Posterior cingulate gyrus (tissue), 11 donors: ENCODE measurements at regions of chr7 and their contacts with region 1.

Region 1: GRCh38 chr7:157138424-157139110 is at the start of gene UBE3C:
- DNase-seq: peak; percentile 81 to 99 (median 86)

Region 2: GRCh38 chr7:157228864-157229422 is 90.4 kb after region 1 on chr7:
- intact Hi-C with region 1: loop called (anchors 10 kb)
- DNase-seq: no peak